ENCODE measurements at regions of chr3 and their contacts with region 1.

Region 1: DNA sequence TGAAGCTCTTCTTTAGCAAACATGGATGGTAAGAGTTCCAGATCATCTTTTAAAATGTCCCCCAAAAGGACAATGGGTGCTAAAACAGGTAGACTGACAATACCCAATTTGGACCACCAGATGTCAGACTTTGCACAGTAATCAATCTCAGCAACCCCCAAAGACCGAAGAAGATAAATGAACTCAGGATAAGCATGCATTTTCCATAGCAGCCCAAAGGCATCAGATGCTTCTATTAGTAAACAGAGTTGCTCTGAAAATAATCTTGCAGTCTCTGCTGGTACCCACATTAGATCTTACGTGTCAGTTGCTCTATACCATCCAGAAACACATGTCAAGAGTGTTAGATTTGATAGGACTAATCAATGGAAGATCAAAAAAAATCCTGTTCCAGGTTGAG is 20.6 kb downstream of the MYH15 start:
- DNase-seq: peak; percentile 25 to 43 (median 33)
- ATAC-seq: peak; percentile 73
- H3K4me3 ChIP-seq: no peak overlapping the region
- H3K27ac ChIP-seq: no peak overlapping the region
- H3K4me1 ChIP-seq: no peaks in the 10 kb centered on the region; a peak in 1 of 5 replicates
- H3K27me3 ChIP-seq: peaks cover 0 to 7% of the 10 kb centered on the region in 2 experiments; a peak in 2 of 5 replicates
- CTCF ChIP-seq: peak; percentile 59 to 69 (median 62); a peak in 5 of 6 replicates
- EP300 ChIP-seq: no peak
- POLR2A ChIP-seq: no peak
- RAD21 ChIP-seq: peak; percentile 76 to 83

Region 2: DNA sequence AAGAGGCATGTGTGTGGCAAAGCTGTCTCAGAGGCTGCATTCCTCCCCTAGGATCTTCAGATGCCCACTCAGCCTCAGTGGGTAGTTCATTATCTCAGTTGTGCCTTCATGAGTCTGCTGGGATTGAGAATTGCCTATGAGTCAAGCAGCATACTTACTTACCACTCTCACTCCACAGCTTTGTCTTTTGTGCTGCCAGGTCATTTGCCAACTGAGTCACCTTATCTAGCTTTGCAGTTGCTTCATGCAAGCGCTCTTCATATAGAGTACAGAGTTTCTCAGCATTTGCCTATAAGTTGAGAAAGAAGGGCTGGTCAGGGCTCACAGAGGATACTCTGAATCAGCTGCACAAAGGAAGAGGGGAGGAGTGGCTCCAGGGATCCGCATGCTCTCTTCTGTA is 68.8 kb before region 1 on chr3:
- CTCF ChIA-PET with region 1: no interaction called
- POLR2A ChIA-PET with region 1: no interaction called
- in situ Hi-C with region 1: no loop called
- intact Hi-C with region 1: no loop called
- DNase-seq: no peak
- ATAC-seq: no peak
- H3K4me3 ChIP-seq: no peak overlapping the region
- H3K27ac ChIP-seq: no peak overlapping the region
- H3K4me1 ChIP-seq: no peaks in the 10 kb centered on the region
- H3K27me3 ChIP-seq: no peaks in the 10 kb centered on the region
- CTCF ChIP-seq: no peak
- EP300 ChIP-seq: no peak
- POLR2A ChIP-seq: no peak
- RAD21 ChIP-seq: no peak

Region 3: DNA sequence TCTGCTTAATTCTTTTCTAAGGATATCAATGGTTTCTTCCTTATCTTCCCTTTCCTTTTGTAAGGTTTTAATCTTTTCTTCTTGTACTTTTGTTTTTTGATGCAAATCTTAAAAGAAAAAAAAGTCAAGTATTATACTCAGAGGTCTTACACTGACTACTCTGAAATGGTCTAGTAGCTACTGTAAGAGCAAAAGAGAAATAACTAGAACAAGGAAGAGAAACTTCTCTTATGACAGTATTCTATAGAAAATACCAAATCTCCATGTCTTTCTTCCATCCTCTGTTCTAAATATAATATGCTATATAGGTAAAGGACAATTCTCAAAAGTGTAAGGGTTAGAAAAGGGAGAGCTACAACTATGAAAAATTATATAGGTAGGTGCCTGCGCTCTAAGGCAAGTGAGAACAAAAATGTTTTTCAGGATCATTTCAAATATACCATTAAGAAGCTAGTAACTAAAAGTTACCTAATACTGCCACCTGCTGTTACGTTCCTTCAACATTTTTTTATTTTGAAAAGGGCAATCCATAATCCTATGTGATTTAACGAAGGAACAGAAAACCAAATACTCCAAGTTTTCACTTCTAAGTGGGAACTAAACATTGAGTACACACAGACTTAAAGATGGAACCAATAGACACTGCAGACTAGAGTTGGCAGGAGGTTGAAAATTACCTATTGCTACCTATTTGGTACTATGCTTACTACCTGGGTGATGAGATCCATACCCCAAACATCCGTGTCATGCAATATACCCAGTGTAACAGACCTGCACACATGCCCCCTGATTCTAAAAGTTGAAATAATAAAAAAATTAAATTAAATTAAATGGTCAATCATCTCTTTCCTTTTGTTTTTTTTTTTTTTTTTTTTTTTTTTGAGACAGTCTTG is 62.7 kb after region 1 on chr3:
- CTCF ChIA-PET with region 1: interaction called, 9 read pairs
- POLR2A ChIA-PET with region 1: no interaction called
- in situ Hi-C with region 1: no loop called
- intact Hi-C with region 1: loop called (anchors 1 kb)
- DNase-seq: peak in 2 of 4 experiments; percentile 6 to 27
- ATAC-seq: peak; percentile 54; the same call in 2 of the 3 replicates
- H3K4me3 ChIP-seq: no peak overlapping the region
- H3K27ac ChIP-seq: no peak overlapping the region
- H3K4me1 ChIP-seq: no peaks in the 10 kb centered on the region
- H3K27me3 ChIP-seq: no peaks in the 10 kb centered on the region
- CTCF ChIP-seq: peak in 1 of 3 experiments; percentile 51; a peak in 2 of 6 replicates
- EP300 ChIP-seq: no peak
- POLR2A ChIP-seq: no peak
- RAD21 ChIP-seq: peak; percentile 46 to 60

Region 4: DNA sequence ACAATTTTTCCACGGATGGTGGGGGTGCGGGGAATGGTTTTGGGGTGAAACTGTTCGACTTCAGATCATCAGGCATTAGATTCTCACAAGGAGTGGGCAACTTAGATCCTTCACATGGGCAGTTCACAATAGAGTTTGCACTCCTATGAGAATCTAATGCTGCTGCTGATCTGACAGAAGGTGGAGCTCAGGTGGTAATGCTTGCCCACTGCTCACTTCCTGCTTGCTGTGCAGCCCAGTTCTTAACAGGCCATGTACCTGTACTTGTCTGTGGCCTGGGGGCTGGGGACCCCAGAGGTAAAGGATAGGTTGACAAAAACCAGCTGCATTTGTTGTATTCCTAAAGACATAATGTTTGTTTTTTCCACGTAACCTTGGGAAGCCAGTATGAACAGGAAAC is 115.7 kb after region 1 on chr3:
- CTCF ChIA-PET with region 1: interaction called, 3 read pairs
- POLR2A ChIA-PET with region 1: no interaction called
- in situ Hi-C with region 1: no loop called
- intact Hi-C with region 1: loop called (anchors 5 kb)
- DNase-seq: no peak
- ATAC-seq: no peak
- H3K4me3 ChIP-seq: no peak overlapping the region
- H3K27ac ChIP-seq: no peak overlapping the region
- H3K4me1 ChIP-seq: no peaks in the 10 kb centered on the region; a peak in 1 of 5 replicates
- H3K27me3 ChIP-seq: no peaks in the 10 kb centered on the region
- CTCF ChIP-seq: no peak
- EP300 ChIP-seq: no peak
- POLR2A ChIP-seq: no peak
- RAD21 ChIP-seq: no peak

Region 5: GRCh38 chr3:108914774-108915641 is 425.2 kb after region 1 on chr3:
- CTCF ChIA-PET with region 1: no interaction called
- POLR2A ChIA-PET with region 1: no interaction called
- in situ Hi-C with region 1: loop called (anchors 25 kb)
- intact Hi-C with region 1: loop called (anchors 2 kb)
- DNase-seq: peak; percentile 29 to 57 (median 54)
- ATAC-seq: peak; percentile 86
- H3K4me3 ChIP-seq: no peak overlapping the region
- H3K27ac ChIP-seq: no peak overlapping the region
- H3K4me1 ChIP-seq: no peaks in the 10 kb centered on the region
- H3K27me3 ChIP-seq: no peaks in the 10 kb centered on the region
- CTCF ChIP-seq: peak; percentile 57 to 71 (median 63)
- EP300 ChIP-seq: no peak
- POLR2A ChIP-seq: no peak
- RAD21 ChIP-seq: peak; percentile 65 to 73

Region 6: GRCh38 chr3:109081746-109082510 is 592.2 kb after region 1 on chr3:
- CTCF ChIA-PET with region 1: no interaction called
- POLR2A ChIA-PET with region 1: no interaction called
- in situ Hi-C with region 1: no loop called
- intact Hi-C with region 1: loop called (anchors 5 kb)
- DNase-seq: peak; percentile 13 to 29 (median 16)
- ATAC-seq: peak; percentile 60; the same call in 1 of the 3 replicates
- H3K4me3 ChIP-seq: no peak overlapping the region
- H3K27ac ChIP-seq: no peak overlapping the region
- H3K4me1 ChIP-seq: no peaks in the 10 kb centered on the region
- H3K27me3 ChIP-seq: no peaks in the 10 kb centered on the region
- CTCF ChIP-seq: peak; percentile 42 to 60 (median 51); a peak in 5 of 6 replicates
- EP300 ChIP-seq: no peak
- POLR2A ChIP-seq: no peak
- RAD21 ChIP-seq: peak in 1 of 2 experiments; percentile 44; a peak in 2 of 4 replicates

Region 7: DNA sequence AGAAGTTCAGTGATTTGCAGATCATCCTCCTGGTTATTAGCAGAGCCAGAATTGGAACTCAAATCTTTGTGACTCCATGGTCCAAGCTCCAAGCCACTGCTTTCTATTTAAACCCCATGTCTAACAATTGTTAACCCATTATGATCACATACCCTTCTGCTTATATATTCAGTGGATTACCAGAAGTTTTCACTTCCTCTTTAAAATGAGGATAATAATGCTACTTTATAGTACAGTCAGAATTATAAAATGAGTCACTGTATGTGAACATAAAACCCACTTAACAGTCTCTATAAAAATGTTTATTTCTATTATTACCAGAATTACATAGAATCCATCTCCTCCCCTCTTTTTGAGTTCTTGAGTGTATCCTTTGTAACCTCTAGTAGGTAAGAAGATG is 1398.3 kb after region 1 on chr3:
- CTCF ChIA-PET with region 1: no interaction called
- POLR2A ChIA-PET with region 1: no interaction called
- in situ Hi-C with region 1: no loop called
- intact Hi-C with region 1: no loop called
- DNase-seq: no peak
- ATAC-seq: no peak
- H3K4me3 ChIP-seq: no peak overlapping the region
- H3K27ac ChIP-seq: no peak overlapping the region
- H3K4me1 ChIP-seq: no peaks in the 10 kb centered on the region
- H3K27me3 ChIP-seq: no peaks in the 10 kb centered on the region
- CTCF ChIP-seq: no peak
- EP300 ChIP-seq: no peak
- POLR2A ChIP-seq: no peak
- RAD21 ChIP-seq: no peak